ENCODE measurements at regions of chr19 and their contacts with region 1.

Region 1: DNA sequence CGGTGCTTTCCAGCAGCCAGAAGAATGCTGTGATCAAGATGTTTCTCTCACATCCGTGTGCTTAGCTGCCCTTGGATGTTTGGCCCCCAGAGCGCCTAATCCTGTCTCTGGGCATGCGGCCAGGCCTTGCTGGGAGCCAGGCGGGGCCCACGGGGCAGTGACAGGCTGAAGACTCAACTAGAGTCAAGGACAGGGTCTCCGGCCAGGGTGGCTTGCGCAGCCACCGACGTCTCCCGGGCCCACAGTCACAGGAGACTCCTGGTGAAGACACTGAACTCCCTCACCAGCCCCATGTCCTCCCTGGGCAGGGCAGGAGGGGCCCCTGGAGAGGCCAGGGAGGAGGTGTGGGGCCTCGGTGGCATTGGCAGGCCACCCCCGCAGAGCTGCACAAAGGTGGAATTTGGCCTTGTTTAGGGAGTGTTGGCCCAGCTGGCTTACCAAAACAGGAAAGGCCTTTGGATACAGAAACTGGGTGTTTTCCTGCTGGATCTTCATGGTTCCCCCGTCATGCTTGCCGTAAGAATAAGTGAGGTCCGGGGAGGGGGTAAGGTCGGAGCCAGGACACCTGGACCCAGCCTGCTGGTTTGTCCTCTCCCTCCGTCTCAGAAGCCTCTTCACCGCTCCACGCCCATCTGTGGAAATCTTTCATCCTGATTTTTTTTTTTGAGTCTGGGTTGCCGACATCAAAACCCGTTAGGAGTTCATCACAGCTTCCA is 10.0 kb upstream of the NDUFS7 start:
- DNase-seq: no peak
- CTCF ChIP-seq: no peak

Region 2: GRCh38 chr19:1275260-1275975 is 98.3 kb before region 1 on chr19 and contains the start of gene FAM174C:
- CTCF ChIA-PET with region 1: interaction called, 87 read pairs
- POLR2A ChIA-PET with region 1: interaction called, 3 read pairs
- DNase-seq: peak; percentile 94
- CTCF ChIP-seq: no peak

Region 3: DNA sequence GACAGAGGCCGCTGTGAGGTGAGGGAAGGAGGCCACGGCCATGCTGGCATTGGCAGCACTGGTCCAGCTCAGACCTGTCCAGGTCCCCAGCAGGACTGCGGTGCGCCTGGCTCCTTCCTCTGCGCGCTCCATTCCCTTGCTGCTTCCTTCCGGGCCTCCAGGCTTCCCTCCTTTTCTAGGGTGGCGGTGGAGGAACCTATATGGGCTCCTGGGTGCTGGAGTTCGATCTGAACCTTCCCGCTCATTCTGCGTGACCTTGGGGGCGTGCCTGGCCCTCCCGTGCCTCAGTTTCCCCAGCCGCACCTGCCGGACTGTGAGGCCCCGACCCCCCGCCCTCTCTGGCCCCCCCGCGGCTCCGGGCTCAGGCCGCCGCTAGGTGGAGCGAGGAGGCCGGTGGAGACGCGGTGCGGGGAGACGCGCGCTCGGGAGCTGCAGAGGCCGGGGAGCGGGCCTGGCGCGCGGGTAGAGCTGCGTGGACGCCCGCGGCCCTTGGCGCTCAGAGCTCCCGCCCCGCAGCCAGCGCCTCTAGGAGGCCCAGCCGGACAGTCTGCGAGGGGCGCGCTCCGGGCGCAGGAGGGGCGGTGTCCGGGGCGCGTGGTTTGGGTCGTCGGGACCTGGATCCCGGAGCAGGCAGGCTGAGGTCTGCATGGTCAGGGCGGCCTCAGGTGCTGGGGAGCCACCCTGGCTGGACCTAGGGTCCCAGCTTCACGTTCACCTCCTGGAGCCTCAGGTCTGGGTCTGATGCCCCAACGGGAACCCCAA is 58.0 kb before region 1 on chr19:
- CTCF ChIA-PET with region 1: interaction called, 47 read pairs
- POLR2A ChIA-PET with region 1: no interaction called
- DNase-seq: peak; percentile 83
- CTCF ChIP-seq: peak; percentile 75